ENCODE measurements at regions of chr2 and their contacts with region 1.

Region 1: GRCh38 chr2:127387655-127388422 is at the start of gene MAP3K2:
- DNase-seq: peak; percentile 94 to 98
- ATAC-seq: peak; percentile 82 to 84
- H3K4me3 ChIP-seq: peak within 1 kb of the TSS; percentile 77 to 97 (median 94)
- H3K27ac ChIP-seq: peak within 1 kb of the TSS; percentile 99 to 100 (median 100)
- H3K4me1 ChIP-seq: peaks cover 35 to 40% of the 10 kb centered on the region in 2 donors
- H3K27me3 ChIP-seq: no peaks in the 10 kb centered on the region
- CTCF ChIP-seq: peak in 1 of 5 experiments; percentile 11
- POLR2A ChIP-seq: peak; percentile 97 to 99
- total RNA-seq, gene MAP3K2: 33.8 to 46.4 (median 39.4) TPM

Region 2: DNA sequence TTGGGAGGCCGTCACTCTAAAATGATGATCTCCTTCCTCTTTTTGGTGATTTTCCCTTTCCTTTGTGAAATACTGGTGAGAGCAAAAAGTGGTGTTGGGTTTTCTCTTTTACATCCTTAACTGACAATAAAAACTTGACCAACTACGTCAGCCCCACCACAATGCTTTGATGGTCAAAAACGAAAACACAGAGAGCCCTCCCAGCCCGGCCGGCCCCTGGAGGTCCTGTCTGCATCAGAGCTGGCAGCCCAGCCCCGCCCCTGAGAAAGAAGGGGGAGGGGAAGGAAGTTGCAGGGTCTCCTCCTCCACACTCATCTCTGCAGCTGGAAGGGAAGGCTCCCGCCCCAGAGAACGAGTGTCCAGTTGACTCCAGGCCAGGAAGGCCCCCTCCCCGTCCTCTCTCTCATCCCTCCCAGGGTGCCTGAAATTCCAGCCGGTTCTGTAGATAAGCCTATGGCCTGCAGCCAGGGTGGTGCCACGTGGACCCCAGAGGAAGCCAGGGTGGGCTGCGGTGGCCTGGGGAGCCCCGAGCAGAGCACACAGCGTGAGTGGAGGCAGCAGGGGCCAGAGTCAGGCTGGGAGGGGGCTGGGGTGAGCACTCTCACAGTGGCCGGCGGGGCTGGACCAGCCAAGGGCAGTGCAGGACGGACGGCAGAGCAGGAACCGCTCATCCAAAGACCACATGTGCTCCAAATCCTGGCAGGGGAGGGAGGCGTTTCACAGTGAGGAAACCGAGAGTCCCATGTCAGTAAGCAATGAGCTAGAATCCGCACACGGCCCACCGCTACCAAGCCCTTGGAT is 300.6 kb before region 1 on chr2:
- in situ Hi-C with region 1: loop called in 1 of 4 experiments (anchors 25 kb)
- intact Hi-C with region 1: no loop called
- DNase-seq: peak in 1 of 2 donors; percentile 87
- ATAC-seq: peak; percentile 18 to 21
- H3K4me3 ChIP-seq: peak overlapping the region; percentile 24 to 42 (median 28)
- H3K27ac ChIP-seq: peak overlapping the region; percentile 97 to 100 (median 100)
- H3K4me1 ChIP-seq: peaks cover 94 to 97% of the 10 kb centered on the region in 2 donors
- H3K27me3 ChIP-seq: no peaks in the 10 kb centered on the region
- CTCF ChIP-seq: no peak
- POLR2A ChIP-seq: peak in 1 of 2 donors; percentile 61

Measured in gastrocnemius medialis (tissue), 4 donors.